Caco-2 (cell line): ENCODE measurements at regions of chr2 and their contacts with region 1.

Region 1: DNA sequence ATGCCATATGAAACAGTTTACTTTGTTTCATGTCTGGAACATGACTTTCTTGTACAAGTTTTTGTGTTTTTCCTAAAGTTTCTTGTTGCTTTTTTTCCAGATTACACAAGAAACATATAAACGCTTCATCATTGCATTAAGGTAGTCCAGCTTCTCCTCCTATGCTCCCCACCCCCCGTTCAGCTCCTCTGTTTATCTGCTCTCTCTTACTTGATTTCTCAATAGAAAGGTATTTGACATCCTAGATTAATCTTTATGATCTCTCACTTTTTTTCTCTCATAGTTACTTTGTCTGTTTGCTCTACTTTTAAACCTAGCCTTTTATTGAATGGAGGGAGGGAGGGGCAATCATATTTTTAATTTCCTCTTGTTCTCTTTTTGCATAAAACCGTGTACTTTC is 25.3 kb downstream of the SLC40A1 start:
- DNase-seq: peak; percentile 77 to 90
- H3K4me3 ChIP-seq: no peak overlapping the region
- H3K4me3 Mint-ChIP-seq: peak overlapping the region; percentile 52
- H3K27ac Mint-ChIP-seq: peak overlapping the region; percentile 70
- H3K4me1 ChIP-seq: peaks cover 85% of the 10 kb centered on the region
- H3K4me1 Mint-ChIP-seq: peaks cover 43% of the 10 kb centered on the region
- H3K27me3 ChIP-seq: no peaks in the 10 kb centered on the region
- H3K27me3 Mint-ChIP-seq: no peaks in the 10 kb centered on the region
- CTCF ChIP-seq: no peak

Region 2: DNA sequence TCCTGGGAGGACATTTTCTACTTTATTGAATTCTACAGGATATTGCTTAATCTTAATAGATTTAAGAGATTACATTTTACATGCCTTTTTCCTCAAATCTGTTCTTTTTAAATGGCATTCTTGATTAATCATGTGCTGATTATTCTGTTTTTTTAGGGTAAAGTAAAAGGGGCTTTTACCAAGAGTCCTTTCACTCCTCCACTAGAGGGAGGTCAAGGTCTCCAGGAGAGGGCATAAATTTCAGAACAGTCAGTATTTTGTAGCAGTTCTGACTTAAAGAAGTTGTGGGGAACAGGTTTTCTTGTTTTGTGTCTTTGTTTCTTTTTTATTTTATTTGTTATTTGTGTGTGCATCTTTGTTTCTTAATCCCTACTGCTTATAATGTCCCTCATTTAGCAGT is 88.6 kb before region 1 on chr2:
- CTCF ChIA-PET with region 1: no interaction called
- POLR2A ChIA-PET with region 1: no interaction called
- intact Hi-C with region 1: loop called (anchors 2 kb)
- DNase-seq: peak in 1 of 2 experiments; percentile 51
- H3K4me3 ChIP-seq: no peak overlapping the region
- H3K4me3 Mint-ChIP-seq: no peak overlapping the region
- H3K27ac Mint-ChIP-seq: no peak overlapping the region
- H3K4me1 ChIP-seq: no peaks in the 10 kb centered on the region
- H3K4me1 Mint-ChIP-seq: no peaks in the 10 kb centered on the region
- H3K27me3 ChIP-seq: no peaks in the 10 kb centered on the region
- H3K27me3 Mint-ChIP-seq: no peaks in the 10 kb centered on the region
- CTCF ChIP-seq: peak; percentile 89 to 90

Region 3: GRCh38 chr2:189506514-189506976 is 48.7 kb before region 1 on chr2:
- CTCF ChIA-PET with region 1: no interaction called
- POLR2A ChIA-PET with region 1: no interaction called
- intact Hi-C with region 1: loop called (anchors 1 kb)
- DNase-seq: peak; percentile 66 to 69
- H3K4me3 ChIP-seq: no peak overlapping the region
- H3K4me3 Mint-ChIP-seq: peak overlapping the region; percentile 32
- H3K27ac Mint-ChIP-seq: peak overlapping the region; percentile 93
- H3K4me1 ChIP-seq: peaks cover 33% of the 10 kb centered on the region
- H3K4me1 Mint-ChIP-seq: peaks cover 25% of the 10 kb centered on the region
- H3K27me3 ChIP-seq: no peaks in the 10 kb centered on the region
- H3K27me3 Mint-ChIP-seq: no peaks in the 10 kb centered on the region
- CTCF ChIP-seq: no peak

Region 4: GRCh38 chr2:189599245-189599644 is 44.0 kb after region 1 on chr2:
- CTCF ChIA-PET with region 1: no interaction called
- POLR2A ChIA-PET with region 1: no interaction called
- intact Hi-C with region 1: loop called (anchors 1 kb)
- DNase-seq: peak; percentile 76 to 81
- H3K4me3 ChIP-seq: no peak overlapping the region
- H3K4me3 Mint-ChIP-seq: peak overlapping the region; percentile 5
- H3K27ac Mint-ChIP-seq: peak overlapping the region; percentile 83
- H3K4me1 ChIP-seq: peaks cover 36% of the 10 kb centered on the region
- H3K4me1 Mint-ChIP-seq: peaks cover 22% of the 10 kb centered on the region
- H3K27me3 ChIP-seq: no peaks in the 10 kb centered on the region
- H3K27me3 Mint-ChIP-seq: no peaks in the 10 kb centered on the region
- CTCF ChIP-seq: no peak